Activated CD8-positive, alpha-beta T cell treated with anti-CD3 and anti-CD28 coated beads for 36 hours (primary cell): ENCODE measurements at regions of chr22 and their contacts with region 1.

Region 1: GRCh38 chr22:29813563-29813962 is 24.5 kb downstream of the ASCC2 start:
- DNase-seq: no peak
- ATAC-seq: no peak
- H3K4me3 Mint-ChIP-seq: no peak overlapping the region
- H3K27ac Mint-ChIP-seq: no peak overlapping the region
- H3K4me1 Mint-ChIP-seq: no peaks in the 10 kb centered on the region
- H3K27me3 Mint-ChIP-seq: no peaks in the 10 kb centered on the region
- CTCF ChIP-seq: no peak

Region 2: DNA sequence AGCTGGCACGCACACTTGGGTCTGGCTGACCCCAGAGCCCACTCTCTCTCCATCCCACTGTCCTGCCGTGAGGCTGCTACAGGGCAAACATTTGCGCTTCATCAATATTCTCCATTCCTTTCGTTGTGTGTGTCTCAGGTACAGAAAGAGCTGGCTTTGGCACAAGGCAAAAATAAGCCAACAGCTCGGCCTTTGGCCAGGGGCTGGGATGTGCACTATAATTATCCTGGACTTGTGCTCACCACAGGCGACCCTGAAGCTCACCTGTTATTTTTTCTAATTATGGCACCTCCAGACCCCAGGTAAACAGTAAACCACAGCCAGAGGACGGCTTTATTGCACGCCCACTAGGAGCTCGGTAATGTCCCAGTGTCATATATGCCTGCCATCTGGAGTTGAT is 57.7 kb before region 1 on chr22:
- CTCF ChIA-PET with region 1: no interaction called
- POLR2A ChIA-PET with region 1: no interaction called
- intact Hi-C with region 1: no loop called
- DNase-seq: no peak
- ATAC-seq: no peak
- H3K4me3 Mint-ChIP-seq: no peak overlapping the region
- H3K27ac Mint-ChIP-seq: no peak overlapping the region
- H3K4me1 Mint-ChIP-seq: peaks cover 6% of the 10 kb centered on the region
- H3K27me3 Mint-ChIP-seq: no peaks in the 10 kb centered on the region
- CTCF ChIP-seq: no peak

Region 3: DNA sequence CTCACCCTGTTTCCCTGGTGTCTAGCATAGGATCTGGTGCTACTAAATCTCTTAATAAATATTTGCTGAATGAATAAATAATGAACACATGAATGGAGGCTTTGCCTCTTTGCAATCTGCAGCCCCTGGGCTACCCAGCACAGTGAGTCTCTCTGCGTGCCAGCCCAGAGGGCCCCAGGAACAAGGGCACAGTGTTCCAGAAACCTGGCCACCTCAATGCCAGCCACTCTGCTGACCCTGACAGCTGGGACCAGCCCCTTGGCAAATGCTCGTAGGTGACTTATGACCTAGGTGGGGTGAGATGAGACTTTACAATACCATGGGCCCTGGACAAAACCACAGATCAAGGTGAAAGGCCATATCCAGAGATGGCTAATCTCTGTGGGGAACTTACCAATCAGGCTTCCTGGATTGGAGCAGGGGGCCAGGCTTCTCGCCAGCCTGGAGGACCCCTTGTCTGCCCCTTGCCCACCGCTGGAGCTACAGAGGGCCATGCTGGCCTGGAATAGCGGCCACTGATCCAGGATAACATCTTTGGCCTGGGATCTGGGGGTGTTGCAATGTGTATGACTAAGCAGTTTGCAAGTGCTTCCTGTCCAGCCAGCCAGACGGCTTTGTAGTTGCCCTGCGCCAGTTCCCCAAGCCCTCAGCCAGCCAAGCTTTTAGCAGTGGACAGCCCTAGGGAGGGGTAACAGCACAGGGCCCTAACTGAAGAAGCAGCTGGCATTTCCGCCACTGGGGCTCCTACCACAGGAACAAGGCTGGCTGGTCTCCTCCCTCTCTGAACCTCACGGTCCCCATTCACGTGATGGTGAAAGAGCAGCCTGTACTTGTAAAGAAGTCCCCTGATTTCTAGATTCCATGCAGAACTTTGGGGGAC is 14.5 kb before region 1 on chr22:
- CTCF ChIA-PET with region 1: no interaction called
- POLR2A ChIA-PET with region 1: no interaction called
- intact Hi-C with region 1: no loop called
- DNase-seq: no peak
- ATAC-seq: no peak
- H3K4me3 Mint-ChIP-seq: no peak overlapping the region
- H3K27ac Mint-ChIP-seq: peak overlapping the region; percentile 63
- H3K4me1 Mint-ChIP-seq: peaks cover 14% of the 10 kb centered on the region
- H3K27me3 Mint-ChIP-seq: no peaks in the 10 kb centered on the region
- CTCF ChIP-seq: no peak

Region 4: DNA sequence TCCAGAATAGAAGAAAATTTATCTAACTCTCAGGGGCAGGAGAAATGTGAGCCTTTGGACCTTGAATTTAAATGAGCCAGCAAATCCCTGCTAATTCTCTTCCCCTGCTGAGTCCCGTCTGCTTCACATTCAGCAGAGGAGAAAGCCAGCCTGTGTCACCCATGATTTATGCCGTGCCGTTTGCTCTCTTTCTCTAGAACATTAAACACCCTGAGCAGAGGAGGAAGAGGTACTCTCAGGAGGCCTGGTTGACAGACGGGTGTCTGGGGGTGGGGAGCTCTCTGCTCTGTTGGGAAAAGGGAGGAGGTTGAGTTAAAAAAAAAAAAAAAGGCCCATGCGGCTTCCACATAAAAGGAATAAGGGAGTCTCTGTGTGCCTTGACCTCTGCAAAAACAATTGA is 58.1 kb after region 1 on chr22:
- CTCF ChIA-PET with region 1: no interaction called
- POLR2A ChIA-PET with region 1: no interaction called
- intact Hi-C with region 1: no loop called
- DNase-seq: no peak
- ATAC-seq: no peak
- H3K4me3 Mint-ChIP-seq: no peak overlapping the region
- H3K27ac Mint-ChIP-seq: no peak overlapping the region
- H3K4me1 Mint-ChIP-seq: peaks cover 6% of the 10 kb centered on the region
- H3K27me3 Mint-ChIP-seq: no peaks in the 10 kb centered on the region
- CTCF ChIP-seq: no peak

Region 5: GRCh38 chr22:30015846-30016245 is 202.3 kb after region 1 on chr22:
- CTCF ChIA-PET with region 1: no interaction called
- POLR2A ChIA-PET with region 1: no interaction called
- intact Hi-C with region 1: loop called (anchors 10 kb)
- DNase-seq: no peak
- ATAC-seq: no peak
- H3K4me3 Mint-ChIP-seq: no peak overlapping the region
- H3K27ac Mint-ChIP-seq: no peak overlapping the region
- H3K4me1 Mint-ChIP-seq: no peaks in the 10 kb centered on the region
- H3K27me3 Mint-ChIP-seq: no peaks in the 10 kb centered on the region
- CTCF ChIP-seq: no peak